Transverse colon (tissue), 4 donors: ENCODE measurements at regions of chr18 and their contacts with region 1.

Region 1: DNA sequence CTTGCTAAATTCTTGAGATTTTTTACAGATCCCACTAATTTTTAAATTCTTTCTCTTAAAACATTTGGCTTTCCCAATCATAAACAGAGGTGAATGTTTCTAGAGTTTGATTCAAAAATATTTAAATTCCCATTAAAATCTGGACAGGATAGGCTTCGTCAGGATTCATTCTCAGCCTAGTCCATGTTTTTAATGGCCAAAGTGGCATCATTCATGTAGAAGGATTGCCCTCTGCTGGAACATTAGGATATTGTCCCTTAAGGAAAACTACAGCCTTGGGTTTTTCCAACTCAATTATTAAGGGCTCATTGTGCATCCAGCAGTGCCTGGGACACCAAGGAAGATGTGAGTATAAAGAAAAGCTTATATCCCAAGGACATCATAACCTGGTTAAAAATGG is 71.7 kb downstream of the TPGS2 start:
- DNase-seq: no peak
- H3K4me3 ChIP-seq: no peak overlapping the region
- H3K27ac ChIP-seq: no peak overlapping the region
- H3K4me1 ChIP-seq: peaks cover 0 to 8% (median 3%) of the 10 kb centered on the region in 4 donors
- H3K27me3 ChIP-seq: no peaks in the 10 kb centered on the region
- CTCF ChIP-seq: peak; percentile 62 to 80 (median 66)
- EP300 ChIP-seq: no peak
- POLR2A ChIP-seq: no peak

Region 2: DNA sequence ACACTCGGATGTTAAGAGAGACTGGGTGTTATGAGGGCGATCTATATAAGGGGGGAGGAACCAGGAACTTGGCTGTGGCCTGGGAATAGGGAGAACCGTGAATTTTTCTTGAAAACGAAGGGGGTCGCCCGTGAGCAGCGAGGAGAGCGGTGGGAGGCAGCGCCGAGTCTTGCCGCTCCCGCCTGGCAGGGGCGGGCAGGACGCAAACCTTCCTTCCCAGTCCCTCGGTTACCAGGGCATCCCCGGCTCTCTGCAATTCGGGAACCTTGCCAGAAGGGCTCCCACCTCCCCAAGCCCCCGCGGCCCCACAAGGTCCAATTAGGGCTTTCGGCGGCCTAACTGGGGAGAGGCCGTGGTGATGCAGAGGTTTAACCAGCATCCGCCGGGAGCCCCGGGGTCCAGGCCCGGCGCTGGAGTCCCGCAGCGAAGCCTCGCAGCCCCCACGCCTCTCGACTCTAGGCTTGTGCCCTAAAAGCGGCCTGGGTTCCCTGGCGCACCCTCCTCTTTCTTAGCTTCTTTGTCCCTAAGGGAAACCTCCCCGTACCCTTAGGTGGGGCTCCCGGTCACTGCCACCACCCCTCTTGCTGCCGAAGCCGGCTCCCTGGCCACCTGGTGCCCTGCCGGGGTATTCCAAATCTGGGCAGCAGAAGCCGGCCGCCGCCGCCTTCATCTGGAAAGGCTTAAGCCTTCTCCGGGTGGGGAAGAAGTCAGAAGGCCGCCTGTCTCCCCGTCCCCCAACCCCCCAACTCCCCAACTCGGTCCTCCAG is 460.2 kb before region 1 on chr18:
- in situ Hi-C with region 1: loop called in 1 of 4 experiments (anchors 25 kb)
- intact Hi-C with region 1: no loop called
- DNase-seq: peak; percentile 36
- H3K4me3 ChIP-seq: peak overlapping the region; percentile 40 to 87 (median 53)
- H3K27ac ChIP-seq: peak overlapping the region; percentile 56 to 67 (median 60)
- H3K4me1 ChIP-seq: peaks cover 14 to 25% (median 22%) of the 10 kb centered on the region in 4 donors
- H3K27me3 ChIP-seq: peaks cover 63% of the 10 kb centered on the region
- CTCF ChIP-seq: peak in 3 of 5 experiments; percentile 2 to 24 (median 4)
- EP300 ChIP-seq: no peak
- POLR2A ChIP-seq: no peak

Region 3: DNA sequence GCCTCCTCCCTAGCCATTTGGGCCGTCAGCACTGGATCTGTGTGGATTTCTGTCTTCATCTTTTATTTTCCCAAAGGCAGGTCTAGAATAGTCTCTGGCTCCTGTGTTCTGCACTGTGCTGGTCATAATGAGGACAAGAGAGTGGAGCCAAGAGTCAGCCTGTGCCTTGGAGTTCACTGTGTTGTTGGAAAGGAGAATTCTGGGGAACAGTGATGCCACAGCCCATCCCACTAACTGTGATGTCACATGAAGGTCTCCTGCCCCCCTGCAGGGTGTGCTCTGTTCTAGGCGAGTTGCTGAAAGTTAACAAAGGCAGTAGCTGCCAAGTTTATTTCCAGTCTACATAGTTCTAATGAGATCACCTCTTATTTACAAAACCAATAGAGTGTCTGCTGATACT is 176.8 kb before region 1 on chr18:
- in situ Hi-C with region 1: no loop called
- intact Hi-C with region 1: loop called (anchors 5 kb)
- DNase-seq: no peak
- H3K4me3 ChIP-seq: no peak overlapping the region
- H3K27ac ChIP-seq: peak overlapping the region in 1 of 4 donors; percentile 13
- H3K4me1 ChIP-seq: peaks cover 2 to 29% (median 10%) of the 10 kb centered on the region in 4 donors
- H3K27me3 ChIP-seq: no peaks in the 10 kb centered on the region
- CTCF ChIP-seq: no peak
- EP300 ChIP-seq: no peak
- POLR2A ChIP-seq: no peak

Region 4: DNA sequence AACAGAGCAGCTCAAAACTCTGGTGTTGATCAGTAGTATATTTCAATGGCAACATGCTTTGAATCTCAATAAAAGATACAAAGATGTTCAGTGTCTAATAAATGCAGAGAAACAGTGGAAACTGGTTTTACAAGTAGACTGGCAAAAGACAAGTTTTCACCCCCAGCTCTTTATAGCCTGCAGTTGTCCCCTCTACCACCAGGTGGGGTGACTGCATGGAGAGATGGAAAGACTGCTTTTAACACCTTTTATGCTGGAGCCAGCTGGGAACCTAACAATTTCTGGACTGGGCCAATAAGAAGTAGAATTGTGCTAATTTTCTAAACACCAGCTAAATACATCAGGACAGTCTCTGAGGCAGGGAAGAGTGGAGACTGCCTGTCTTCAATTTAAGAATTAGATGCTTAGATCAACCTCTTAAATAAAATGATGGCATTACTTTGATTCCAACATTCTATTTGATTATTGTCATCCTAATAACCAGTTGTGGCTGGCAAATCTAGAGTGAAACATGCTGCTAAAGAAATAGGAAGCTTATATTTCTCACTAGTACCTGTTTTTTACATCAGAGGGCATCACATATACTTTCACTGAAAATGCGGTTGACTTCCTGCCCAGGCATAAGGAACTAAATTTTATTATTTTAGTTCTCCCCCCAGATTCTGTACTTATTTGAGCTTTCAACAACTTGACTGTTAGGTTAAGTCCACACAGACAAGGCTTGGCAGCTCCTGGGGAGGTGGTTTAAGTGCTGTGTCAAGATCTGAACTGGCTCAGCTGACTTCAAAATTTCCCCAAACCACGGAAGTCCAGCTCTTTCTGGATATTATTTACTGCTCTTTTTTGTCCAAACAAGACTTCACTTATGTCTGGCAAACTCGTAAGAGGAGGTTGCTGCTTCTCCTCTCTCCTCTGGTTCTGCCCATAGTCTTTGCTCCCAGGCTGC is 68.8 kb before region 1 on chr18:
- in situ Hi-C with region 1: loop called in 1 of 4 experiments (anchors 10 kb)
- intact Hi-C with region 1: loop called (anchors 5 kb)
- DNase-seq: peak; percentile 66
- H3K4me3 ChIP-seq: no peak overlapping the region
- H3K27ac ChIP-seq: no peak overlapping the region
- H3K4me1 ChIP-seq: peaks cover 0 to 15% (median 0%) of the 10 kb centered on the region in 4 donors
- H3K27me3 ChIP-seq: no peaks in the 10 kb centered on the region
- CTCF ChIP-seq: peak; percentile 77 to 91 (median 85)
- EP300 ChIP-seq: no peak
- POLR2A ChIP-seq: no peak

Region 5: GRCh38 chr18:37033419-37033818 is 276.3 kb after region 1 on chr18:
- in situ Hi-C with region 1: no loop called
- intact Hi-C with region 1: no loop called
- DNase-seq: no peak
- H3K4me3 ChIP-seq: no peak overlapping the region
- H3K27ac ChIP-seq: no peak overlapping the region
- H3K4me1 ChIP-seq: no peaks in the 10 kb centered on the region
- H3K27me3 ChIP-seq: no peaks in the 10 kb centered on the region
- CTCF ChIP-seq: no peak
- EP300 ChIP-seq: no peak
- POLR2A ChIP-seq: no peak

Region 6: DNA sequence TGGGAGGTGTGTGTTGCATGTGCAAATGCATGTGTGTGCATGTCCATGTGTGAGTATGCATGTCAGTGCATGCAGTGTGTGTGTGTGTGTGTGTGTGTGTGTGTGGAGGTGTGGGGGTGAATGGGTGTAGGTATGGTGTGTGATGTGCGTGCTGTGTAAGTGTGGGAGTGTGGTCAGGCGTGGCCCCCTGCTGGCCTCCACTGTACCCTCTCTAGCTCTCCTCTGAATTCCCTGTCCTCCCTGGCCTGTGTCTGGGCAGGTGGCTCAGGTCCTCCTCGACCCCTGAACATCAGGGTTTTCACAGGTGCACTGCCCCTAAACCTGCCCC is 578.3 kb after region 1 on chr18:
- in situ Hi-C with region 1: no loop called
- intact Hi-C with region 1: no loop called
- DNase-seq: no peak
- H3K4me3 ChIP-seq: no peak overlapping the region
- H3K27ac ChIP-seq: no peak overlapping the region
- H3K4me1 ChIP-seq: no peaks in the 10 kb centered on the region
- H3K27me3 ChIP-seq: no peaks in the 10 kb centered on the region
- CTCF ChIP-seq: peak in 1 of 5 experiments; percentile 19
- EP300 ChIP-seq: no peak
- POLR2A ChIP-seq: no peak